ENCODE measurements at regions of chr15 and their contacts with region 1.

Region 1: GRCh38 chr15:45611305-45611704 is 23.5 kb upstream of the SQOR start:
- DNase-seq: no peak
- ATAC-seq: no peak
- H3K4me3 ChIP-seq: no peak overlapping the region
- H3K27ac ChIP-seq: no peak overlapping the region
- H3K4me1 ChIP-seq: no peaks in the 10 kb centered on the region
- H3K27me3 ChIP-seq: no peaks in the 10 kb centered on the region
- CTCF ChIP-seq: peak; percentile 54
- POLR2A ChIP-seq: no peak
- RAD21 ChIP-seq: peak; percentile 41

Region 2: DNA sequence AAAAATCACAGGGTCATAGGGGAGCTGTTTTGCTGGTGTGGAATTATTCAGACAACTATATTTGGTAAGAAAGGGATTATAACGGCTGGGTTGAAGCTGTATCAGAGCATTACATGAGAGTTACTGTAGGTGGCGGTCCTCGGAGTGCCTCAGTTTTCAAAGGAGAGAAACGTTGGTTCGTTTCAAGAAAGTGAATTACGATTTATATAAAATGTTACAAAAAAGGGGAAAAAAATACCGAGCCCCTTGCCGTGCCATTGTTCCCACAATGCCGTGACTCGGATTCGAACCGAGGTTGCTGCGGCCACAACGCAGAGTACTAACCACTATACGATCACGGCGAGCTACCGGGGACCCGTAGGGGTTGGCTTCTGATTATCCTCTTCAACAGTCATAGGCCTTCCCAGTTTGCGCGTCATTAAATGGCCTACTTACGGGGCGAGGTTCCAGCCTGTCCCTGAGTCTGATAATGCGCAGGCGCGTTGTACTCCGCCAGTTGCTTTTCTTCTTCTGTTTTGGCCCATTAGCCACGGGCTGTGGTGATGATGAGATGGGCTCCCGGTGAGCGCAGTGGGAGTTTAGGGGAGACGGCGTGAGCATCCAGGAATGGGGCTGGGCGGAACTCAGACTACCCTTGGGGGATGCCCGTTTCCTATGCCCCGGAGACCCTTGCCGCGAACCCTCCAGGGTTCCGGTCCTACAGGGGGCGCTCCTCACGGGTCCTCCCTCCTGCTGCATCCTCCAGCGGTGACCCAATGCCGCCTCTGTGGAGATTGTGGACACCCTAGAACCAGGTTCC is 412.8 kb before region 1 on chr15:
- CTCF ChIA-PET with region 1: no interaction called
- POLR2A ChIA-PET with region 1: no interaction called
- dilution Hi-C with region 1: no loop called
- in situ Hi-C with region 1: loop called (anchors 25 kb)
- intact Hi-C with region 1: no loop called
- DNase-seq: peak; percentile 96
- ATAC-seq: peak; percentile 69
- H3K4me3 ChIP-seq: peak overlapping the region; percentile 70
- H3K27ac ChIP-seq: peak overlapping the region; percentile 73
- H3K4me1 ChIP-seq: peaks cover 2% of the 10 kb centered on the region; the same call in 1 of the 2 replicates
- H3K27me3 ChIP-seq: peaks cover 1% of the 10 kb centered on the region; the same call in 1 of the 2 replicates
- CTCF ChIP-seq: peak; percentile 69
- POLR2A ChIP-seq: peak; percentile 83
- RAD21 ChIP-seq: peak; percentile 44

Region 3: DNA sequence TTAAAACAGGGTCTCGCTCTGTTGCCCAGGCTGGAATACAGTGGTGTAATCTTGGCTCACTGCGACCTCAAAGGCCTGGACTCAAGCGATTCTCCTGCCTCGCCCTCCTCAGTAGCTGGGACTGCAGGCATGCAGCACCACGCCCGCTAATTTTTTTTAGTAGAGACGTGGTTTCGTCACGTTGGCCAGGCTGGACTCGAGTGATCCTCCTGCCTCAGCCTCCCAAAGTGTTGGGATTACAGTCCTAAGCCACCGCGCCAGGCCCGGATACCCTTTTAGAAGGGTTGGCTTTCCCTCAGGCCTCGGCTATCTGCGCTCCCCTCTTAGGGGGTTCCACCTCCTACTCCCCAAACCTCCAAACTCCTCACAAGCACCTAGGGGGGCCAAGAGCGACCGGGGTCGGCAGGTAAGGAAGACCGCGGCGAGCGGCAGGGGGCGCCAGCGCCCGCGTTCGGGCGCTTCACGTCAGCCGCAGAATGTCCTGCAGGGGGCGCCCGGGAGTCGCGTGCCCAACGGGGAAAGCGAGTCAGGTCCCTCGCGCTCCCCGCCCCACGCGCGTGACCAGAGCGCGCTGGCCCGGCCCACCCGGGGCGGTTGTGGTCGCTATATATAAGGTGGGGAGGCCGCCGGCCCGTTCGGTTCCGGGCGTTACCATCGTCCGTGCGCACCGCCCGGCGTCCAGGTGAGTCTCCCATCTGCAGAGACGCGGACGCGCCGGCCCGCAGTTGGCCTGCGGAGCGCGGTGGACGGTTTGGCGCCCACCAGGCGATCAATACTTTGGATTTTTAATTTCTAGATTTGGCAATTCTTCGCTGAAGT is 181.1 kb before region 1 on chr15:
- CTCF ChIA-PET with region 1: interaction called, 10 read pairs
- POLR2A ChIA-PET with region 1: no interaction called
- dilution Hi-C with region 1: no loop called
- in situ Hi-C with region 1: no loop called
- intact Hi-C with region 1: no loop called
- DNase-seq: peak; percentile 46
- ATAC-seq: peak; percentile 95
- H3K4me3 ChIP-seq: peak overlapping the region; percentile 60
- H3K27ac ChIP-seq: no peak overlapping the region
- H3K4me1 ChIP-seq: no peaks in the 10 kb centered on the region
- H3K27me3 ChIP-seq: peaks cover 2% of the 10 kb centered on the region; the same call in 1 of the 2 replicates
- CTCF ChIP-seq: peak; percentile 100; the same call in 1 of the 2 replicates
- POLR2A ChIP-seq: 0 out of 2 replicates have a peak, but pooled peaks have one; percentile 24
- RAD21 ChIP-seq: peak; percentile 95

Region 4: DNA sequence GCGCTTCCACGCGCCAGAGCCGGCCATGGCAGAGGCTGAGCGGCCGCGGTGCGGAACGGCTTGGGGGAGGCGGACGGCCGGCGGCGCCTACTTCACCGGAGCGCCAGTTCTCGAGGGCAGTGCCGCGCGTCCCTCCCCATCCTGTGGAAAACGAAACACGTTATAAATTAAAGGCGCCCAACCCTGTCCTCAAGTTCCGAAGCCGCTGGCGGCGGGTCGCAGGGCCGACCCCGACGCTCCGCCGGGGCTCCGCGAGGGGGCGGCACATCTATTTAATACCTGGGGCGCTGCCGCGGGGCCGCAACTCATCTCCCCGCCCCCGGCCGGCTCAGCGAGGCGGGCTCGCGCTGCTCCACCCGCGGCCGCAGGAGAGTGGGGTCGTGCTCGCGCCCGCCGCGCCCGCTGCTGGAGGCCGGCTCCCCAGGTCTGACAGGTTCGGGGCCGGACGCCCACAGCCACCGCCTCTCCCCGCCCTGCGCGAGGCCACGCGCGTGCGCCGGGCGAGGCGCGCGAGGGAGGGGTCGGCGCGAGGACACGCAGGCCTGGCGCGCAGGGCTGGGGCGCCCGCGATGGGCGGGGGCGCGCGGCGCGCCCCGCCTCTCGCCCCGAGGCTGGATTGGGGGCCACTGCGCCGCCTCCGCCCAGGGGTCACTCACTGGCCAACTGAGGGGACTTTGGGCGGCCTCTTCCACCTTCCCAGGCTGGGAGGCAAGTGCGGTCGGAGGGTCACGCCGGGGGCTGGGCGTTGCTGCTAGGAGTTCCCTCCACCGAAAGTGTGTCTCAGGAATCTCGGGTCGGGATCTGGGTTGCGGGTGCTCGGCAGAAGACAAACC is 88.8 kb before region 1 on chr15 and contains the start of gene SLC30A4:
- CTCF ChIA-PET with region 1: interaction called, 3 read pairs
- POLR2A ChIA-PET with region 1: no interaction called
- dilution Hi-C with region 1: no loop called
- in situ Hi-C with region 1: no loop called
- intact Hi-C with region 1: loop called (anchors 5 kb)
- DNase-seq: peak; percentile 42
- ATAC-seq: peak; percentile 97
- H3K4me3 ChIP-seq: peak within 1 kb of the TSS; percentile 83
- H3K27ac ChIP-seq: peak within 1 kb of the TSS; percentile 14
- H3K4me1 ChIP-seq: no peaks in the 10 kb centered on the region
- H3K27me3 ChIP-seq: no peaks in the 10 kb centered on the region
- CTCF ChIP-seq: peak; percentile 36
- POLR2A ChIP-seq: no peak
- RAD21 ChIP-seq: no peak
- total RNA-seq, gene SLC30A4: 5.6 and 7.5 TPM in 2 replicates

Region 5: GRCh38 chr15:45705510-45706473 is 94.5 kb after region 1 on chr15:
- CTCF ChIA-PET with region 1: no interaction called
- POLR2A ChIA-PET with region 1: no interaction called
- dilution Hi-C with region 1: no loop called
- in situ Hi-C with region 1: no loop called
- intact Hi-C with region 1: loop called (anchors 1 kb)
- DNase-seq: peak; percentile 86
- ATAC-seq: peak; percentile 83
- H3K4me3 ChIP-seq: peak overlapping the region; percentile 43
- H3K27ac ChIP-seq: no peak overlapping the region
- H3K4me1 ChIP-seq: no peaks in the 10 kb centered on the region
- H3K27me3 ChIP-seq: 0 out of 2 replicates have a peak, but pooled peaks cover 2% of the 10 kb centered on the region
- CTCF ChIP-seq: peak; percentile 87
- POLR2A ChIP-seq: no peak
- RAD21 ChIP-seq: peak; percentile 79

Region 6: GRCh38 chr15:45842151-45842550 is 230.8 kb after region 1 on chr15:
- CTCF ChIA-PET with region 1: no interaction called
- POLR2A ChIA-PET with region 1: no interaction called
- dilution Hi-C with region 1: no loop called
- in situ Hi-C with region 1: no loop called
- intact Hi-C with region 1: no loop called
- DNase-seq: no peak
- ATAC-seq: no peak
- H3K4me3 ChIP-seq: no peak overlapping the region
- H3K27ac ChIP-seq: no peak overlapping the region
- H3K4me1 ChIP-seq: no peaks in the 10 kb centered on the region
- H3K27me3 ChIP-seq: no peaks in the 10 kb centered on the region
- CTCF ChIP-seq: no peak
- POLR2A ChIP-seq: no peak
- RAD21 ChIP-seq: no peak